Endothelial cell of umbilical vein (primary cell): ENCODE measurements at regions of chr2 and their contacts with region 1.

Region 1: GRCh38 chr2:142130111-142131009 is 456 bp downstream of the LRP1B start:
- DNase-seq: peak; percentile 56
- H3K4me3 ChIP-seq: peak overlapping the region; percentile 50 to 83 (median 53)
- H3K27ac ChIP-seq: no peak overlapping the region
- H3K4me1 ChIP-seq: peaks cover 11% of the 10 kb centered on the region
- H3K27me3 ChIP-seq: peaks cover 15 to 33% of the 10 kb centered on the region in 2 experiments
- CTCF ChIP-seq: no peak
- POLR2A ChIP-seq: no peak

Region 2: GRCh38 chr2:140178234-140178633 is 1952.1 kb before region 1 on chr2:
- CTCF ChIA-PET with region 1: no interaction called
- POLR2A ChIA-PET with region 1: no interaction called
- dilution Hi-C with region 1: no loop called
- intact Hi-C with region 1: loop called (anchors 10 kb)
- DNase-seq: no peak
- H3K4me3 ChIP-seq: no peak overlapping the region
- H3K27ac ChIP-seq: no peak overlapping the region
- H3K4me1 ChIP-seq: no peaks in the 10 kb centered on the region
- H3K27me3 ChIP-seq: no peaks in the 10 kb centered on the region
- CTCF ChIP-seq: no peak
- POLR2A ChIP-seq: no peak

Region 3: GRCh38 chr2:141611176-141611571 is 519.2 kb before region 1 on chr2:
- CTCF ChIA-PET with region 1: no interaction called
- POLR2A ChIA-PET with region 1: no interaction called
- dilution Hi-C with region 1: no loop called
- intact Hi-C with region 1: loop called (anchors 2 kb)
- DNase-seq: peak; percentile 87
- H3K4me3 ChIP-seq: peak overlapping the region in 2 of 3 experiments; percentile 15 to 54
- H3K27ac ChIP-seq: peak overlapping the region; percentile 73
- H3K4me1 ChIP-seq: peaks cover 20% of the 10 kb centered on the region
- H3K27me3 ChIP-seq: no peaks in the 10 kb centered on the region
- CTCF ChIP-seq: no peak
- POLR2A ChIP-seq: no peak

Region 4: GRCh38 chr2:141911485-141912066 is 218.8 kb before region 1 on chr2:
- CTCF ChIA-PET with region 1: no interaction called
- POLR2A ChIA-PET with region 1: no interaction called
- dilution Hi-C with region 1: no loop called
- intact Hi-C with region 1: loop called (anchors 10 kb)
- DNase-seq: peak; percentile 40
- H3K4me3 ChIP-seq: no peak overlapping the region
- H3K27ac ChIP-seq: no peak overlapping the region
- H3K4me1 ChIP-seq: no peaks in the 10 kb centered on the region
- H3K27me3 ChIP-seq: no peaks in the 10 kb centered on the region
- CTCF ChIP-seq: peak; percentile 26 to 28
- POLR2A ChIP-seq: no peak

Region 5: DNA sequence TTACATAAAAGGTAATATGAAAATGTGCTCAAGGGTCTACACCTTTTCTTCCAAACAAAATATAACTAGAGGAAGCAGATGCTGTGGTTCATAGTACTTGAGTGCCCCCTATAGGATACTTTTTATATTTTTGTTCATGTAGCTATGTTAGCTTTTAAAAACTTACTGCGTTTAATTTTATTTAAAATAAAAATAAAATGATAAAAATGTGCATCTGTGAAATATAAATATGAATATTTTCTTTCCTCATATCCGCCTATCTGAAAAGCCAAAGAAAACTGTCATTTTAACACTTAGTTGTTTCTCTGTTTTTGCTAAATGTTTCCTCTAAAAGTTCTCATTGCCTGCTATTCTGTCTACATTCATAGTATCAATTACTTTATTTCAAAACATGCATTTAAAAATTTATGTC is 10.1 kb after region 1 on chr2:
- CTCF ChIA-PET with region 1: interaction called, 54 read pairs
- POLR2A ChIA-PET with region 1: no interaction called
- dilution Hi-C with region 1: no loop called
- intact Hi-C with region 1: no loop called
- DNase-seq: peak; percentile 36
- H3K4me3 ChIP-seq: no peak overlapping the region
- H3K27ac ChIP-seq: no peak overlapping the region
- H3K4me1 ChIP-seq: no peaks in the 10 kb centered on the region
- H3K27me3 ChIP-seq: peaks cover 2 to 7% of the 10 kb centered on the region in 2 experiments
- CTCF ChIP-seq: peak in 1 of 2 donors; percentile 24
- POLR2A ChIP-seq: no peak

Region 6: GRCh38 chr2:142153601-142154000 is 23.2 kb after region 1 on chr2:
- CTCF ChIA-PET with region 1: no interaction called
- POLR2A ChIA-PET with region 1: no interaction called
- dilution Hi-C with region 1: no loop called
- intact Hi-C with region 1: no loop called
- DNase-seq: no peak
- H3K4me3 ChIP-seq: no peak overlapping the region
- H3K27ac ChIP-seq: no peak overlapping the region
- H3K4me1 ChIP-seq: no peaks in the 10 kb centered on the region
- H3K27me3 ChIP-seq: no peaks in the 10 kb centered on the region
- CTCF ChIP-seq: no peak
- POLR2A ChIP-seq: no peak

Region 7: DNA sequence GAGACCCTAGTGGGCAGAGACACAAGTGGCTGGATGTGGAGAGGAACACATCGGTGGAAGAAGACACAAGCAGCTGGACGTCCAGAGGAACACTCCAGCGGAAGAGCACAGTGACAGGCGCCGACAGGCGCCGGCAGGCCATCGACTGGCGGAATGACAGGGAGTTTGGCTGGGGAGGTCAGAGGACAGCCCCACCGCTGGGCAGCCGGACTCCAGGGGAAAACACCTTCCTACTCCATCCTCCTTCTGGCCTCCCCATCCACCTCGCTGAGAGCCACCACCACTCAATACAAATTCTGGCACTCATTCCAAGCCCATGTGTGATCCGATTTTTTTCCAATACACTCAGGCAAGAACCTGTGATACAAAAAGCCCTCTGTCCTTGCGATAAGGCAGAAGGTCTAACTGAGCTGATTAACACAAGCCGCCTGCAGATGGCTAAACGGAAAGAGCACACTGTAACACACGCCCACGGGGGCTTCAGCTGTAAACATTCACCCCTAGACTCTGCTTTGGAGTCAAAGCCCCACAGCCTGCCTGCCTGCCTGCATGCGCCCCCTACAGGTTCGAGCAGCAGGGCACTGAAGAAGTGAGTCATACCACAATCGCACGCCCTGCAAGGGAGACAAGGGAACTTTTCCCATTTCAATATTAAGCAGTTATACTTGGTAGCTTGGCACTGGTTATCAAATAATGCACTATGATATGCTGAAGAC is 50.6 kb after region 1 on chr2:
- CTCF ChIA-PET with region 1: no interaction called
- POLR2A ChIA-PET with region 1: no interaction called
- dilution Hi-C with region 1: no loop called
- intact Hi-C with region 1: loop called (anchors 2 kb)
- DNase-seq: peak; percentile 58
- H3K4me3 ChIP-seq: no peak overlapping the region
- H3K27ac ChIP-seq: no peak overlapping the region
- H3K4me1 ChIP-seq: peaks cover 10% of the 10 kb centered on the region
- H3K27me3 ChIP-seq: no peaks in the 10 kb centered on the region
- CTCF ChIP-seq: peak; percentile 66 to 71
- POLR2A ChIP-seq: no peak